ENCODE measurements at regions of chr10 and their contacts with region 1.

Region 1: DNA sequence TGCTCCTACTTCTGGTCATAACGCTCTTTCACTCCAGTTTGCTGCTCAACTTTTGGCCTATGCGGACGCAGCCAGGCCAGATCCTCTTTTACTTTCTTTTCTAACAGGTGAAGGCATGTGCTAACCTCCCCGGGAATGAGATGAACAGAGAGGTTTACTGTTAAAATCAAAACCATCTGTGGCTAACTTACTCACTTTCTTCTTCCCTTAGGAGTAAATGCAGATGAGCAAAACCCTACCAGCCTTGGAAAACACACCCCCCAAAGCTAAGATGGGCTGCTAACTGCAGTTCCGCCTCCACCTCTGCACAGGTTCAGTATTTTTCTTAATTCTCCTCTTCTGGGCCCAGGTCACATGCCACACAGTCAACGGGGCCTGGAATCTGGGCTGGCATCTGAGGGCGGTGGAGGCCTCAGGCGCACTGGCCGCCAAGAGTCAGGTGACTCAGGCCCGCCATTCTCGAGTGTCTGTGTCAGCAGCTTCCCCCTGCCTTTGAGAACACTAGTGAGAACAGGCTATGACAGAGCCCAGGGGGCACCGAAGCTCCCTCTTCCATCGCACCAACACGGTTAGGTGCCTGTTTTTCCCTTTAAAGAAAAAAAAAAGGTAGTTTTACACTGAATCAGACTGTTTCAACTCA is 11.1 kb downstream of the FAM53B start:
- DNase-seq: peak; percentile 84
- ATAC-seq: peak; percentile 66
- H3K4me3 ChIP-seq: no peak overlapping the region
- H3K27ac ChIP-seq: peak overlapping the region; percentile 43
- H3K4me1 ChIP-seq: peaks cover 70% of the 10 kb centered on the region
- H3K27me3 ChIP-seq: no peaks in the 10 kb centered on the region
- CTCF ChIP-seq: no peak

Region 2: DNA sequence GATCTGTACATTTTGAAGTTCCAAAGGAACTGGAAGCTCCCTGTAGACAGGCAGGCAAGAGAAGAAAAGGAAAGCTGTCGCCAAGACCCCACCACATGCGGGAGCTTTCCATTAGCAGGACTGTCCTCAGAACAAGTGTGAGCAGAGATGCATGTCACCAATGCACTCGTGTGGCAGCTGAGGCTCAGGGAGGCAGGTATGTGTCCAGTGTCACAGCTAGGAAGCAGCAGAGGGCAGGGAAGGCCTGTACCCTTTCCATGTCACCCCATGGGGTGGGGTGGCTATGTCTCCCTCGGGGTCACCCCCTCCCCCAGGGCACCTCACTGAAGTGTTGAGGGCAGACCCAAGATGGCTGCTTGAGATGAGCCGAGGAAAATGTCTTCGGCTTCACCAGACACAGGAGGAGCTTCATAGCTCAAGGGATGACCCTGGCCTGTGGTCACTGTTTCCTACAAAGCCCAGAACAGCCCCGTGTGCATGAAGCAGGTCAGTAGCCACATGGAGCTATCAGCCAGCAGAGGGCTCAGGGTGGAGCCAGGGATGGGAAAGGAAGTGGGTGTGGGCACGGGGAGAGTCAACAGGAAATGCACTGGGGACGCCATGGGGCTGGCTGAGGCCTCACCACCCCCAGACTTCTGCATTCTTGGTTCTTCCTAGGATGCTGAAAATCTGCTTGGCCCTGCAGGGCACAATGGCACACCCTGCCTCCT is 85.5 kb before region 1 on chr10:
- intact Hi-C with region 1: loop called (anchors 10 kb)
- DNase-seq: peak; percentile 85
- ATAC-seq: peak; percentile 91
- H3K4me3 ChIP-seq: no peak overlapping the region
- H3K27ac ChIP-seq: peak overlapping the region; percentile 84
- H3K4me1 ChIP-seq: peaks cover 67% of the 10 kb centered on the region
- H3K27me3 ChIP-seq: no peaks in the 10 kb centered on the region
- CTCF ChIP-seq: peak; percentile 34